Motor neuron (in vitro differentiated cells): ENCODE measurements at regions of chr7 and their contacts with region 1.

Region 1: DNA sequence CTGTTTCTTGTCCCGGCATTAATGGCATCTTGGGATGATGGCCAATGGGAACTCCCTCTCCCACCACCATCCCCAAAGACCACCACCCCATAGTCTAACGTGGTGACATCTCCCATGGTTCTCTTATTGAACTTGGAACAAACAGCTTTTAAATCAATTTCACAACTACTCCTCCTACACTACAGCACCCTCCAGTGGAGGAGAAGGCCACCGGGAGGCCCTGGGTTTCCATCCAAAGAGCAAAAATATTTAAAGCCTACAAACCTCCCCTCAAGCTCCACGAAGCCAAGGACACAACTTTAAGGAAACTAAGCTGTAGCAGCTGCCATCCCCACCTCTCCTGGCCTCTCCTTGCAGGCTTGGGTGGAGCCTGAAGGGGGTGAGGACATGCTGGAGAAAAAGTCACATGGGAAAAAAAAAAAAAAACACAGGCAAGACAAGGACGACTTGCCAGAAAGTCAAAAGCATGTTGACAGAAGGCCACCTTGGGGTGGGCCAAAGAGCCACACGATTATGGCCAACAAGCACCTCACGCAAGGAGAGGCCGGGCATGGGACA is 94.0 kb upstream of the LANCL2 start:
- ATAC-seq: peak in 2 of 8 experiments; percentile 74 to 76
- H3K4me3 ChIP-seq: no peak overlapping the region
- H3K27ac ChIP-seq: no peak overlapping the region
- H3K4me1 ChIP-seq: peaks cover 3 to 13% of the 10 kb centered on the region in 2 donors

Region 2: GRCh38 chr7:55158541-55159382 is 112.4 kb before region 1 on chr7:
- in situ Hi-C with region 1: no loop called
- ATAC-seq: peak in 2 of 8 experiments; percentile 16 to 36
- H3K4me3 ChIP-seq: no peak overlapping the region
- H3K27ac ChIP-seq: no peak overlapping the region
- H3K4me1 ChIP-seq: peaks cover 16 to 26% of the 10 kb centered on the region in 2 donors

Region 3: DNA sequence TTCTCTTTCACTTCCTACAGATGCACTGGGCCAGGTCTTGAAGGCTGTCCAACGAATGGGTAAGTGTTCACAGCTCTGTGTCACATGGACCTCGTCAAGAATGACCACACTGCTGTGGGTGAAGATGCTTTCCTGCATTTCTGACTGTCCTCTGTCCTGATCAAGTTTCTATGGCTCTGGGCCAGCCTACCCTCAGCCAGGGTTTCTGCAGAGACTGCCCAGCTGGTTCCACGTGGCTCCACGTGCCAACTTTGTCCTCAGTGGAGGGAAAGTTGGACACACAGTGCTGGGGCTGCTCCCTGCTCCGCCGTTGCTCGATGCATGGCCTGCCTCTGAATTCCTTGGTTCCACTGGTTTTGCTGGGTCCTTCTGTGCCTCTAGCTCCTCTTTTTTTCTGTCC is 100.0 kb before region 1 on chr7:
- in situ Hi-C with region 1: no loop called
- ATAC-seq: no peak
- H3K4me3 ChIP-seq: no peak overlapping the region
- H3K27ac ChIP-seq: no peak overlapping the region
- H3K4me1 ChIP-seq: peaks cover 0 to 3% of the 10 kb centered on the region in 2 donors

Region 4: GRCh38 chr7:55415173-55415778 is 144.1 kb after region 1 on chr7:
- in situ Hi-C with region 1: loop called in 6 of 9 experiments (anchors 10 to 25 kb)
- ATAC-seq: peak; percentile 70 to 91 (median 79)
- H3K4me3 ChIP-seq: no peak overlapping the region
- H3K27ac ChIP-seq: no peak overlapping the region
- H3K4me1 ChIP-seq: peaks cover 1 to 2% of the 10 kb centered on the region in 2 donors

Region 5: GRCh38 chr7:55423277-55423711 is 152.1 kb after region 1 on chr7:
- in situ Hi-C with region 1: loop called in 6 of 9 experiments (anchors 10 to 25 kb)
- ATAC-seq: peak in 5 of 8 experiments; percentile 21 to 60 (median 35)
- H3K4me3 ChIP-seq: no peak overlapping the region
- H3K27ac ChIP-seq: no peak overlapping the region
- H3K4me1 ChIP-seq: peaks cover 16 to 21% of the 10 kb centered on the region in 2 donors